ENCODE measurements at regions of chr1 and their contacts with region 1.

Region 1: DNA sequence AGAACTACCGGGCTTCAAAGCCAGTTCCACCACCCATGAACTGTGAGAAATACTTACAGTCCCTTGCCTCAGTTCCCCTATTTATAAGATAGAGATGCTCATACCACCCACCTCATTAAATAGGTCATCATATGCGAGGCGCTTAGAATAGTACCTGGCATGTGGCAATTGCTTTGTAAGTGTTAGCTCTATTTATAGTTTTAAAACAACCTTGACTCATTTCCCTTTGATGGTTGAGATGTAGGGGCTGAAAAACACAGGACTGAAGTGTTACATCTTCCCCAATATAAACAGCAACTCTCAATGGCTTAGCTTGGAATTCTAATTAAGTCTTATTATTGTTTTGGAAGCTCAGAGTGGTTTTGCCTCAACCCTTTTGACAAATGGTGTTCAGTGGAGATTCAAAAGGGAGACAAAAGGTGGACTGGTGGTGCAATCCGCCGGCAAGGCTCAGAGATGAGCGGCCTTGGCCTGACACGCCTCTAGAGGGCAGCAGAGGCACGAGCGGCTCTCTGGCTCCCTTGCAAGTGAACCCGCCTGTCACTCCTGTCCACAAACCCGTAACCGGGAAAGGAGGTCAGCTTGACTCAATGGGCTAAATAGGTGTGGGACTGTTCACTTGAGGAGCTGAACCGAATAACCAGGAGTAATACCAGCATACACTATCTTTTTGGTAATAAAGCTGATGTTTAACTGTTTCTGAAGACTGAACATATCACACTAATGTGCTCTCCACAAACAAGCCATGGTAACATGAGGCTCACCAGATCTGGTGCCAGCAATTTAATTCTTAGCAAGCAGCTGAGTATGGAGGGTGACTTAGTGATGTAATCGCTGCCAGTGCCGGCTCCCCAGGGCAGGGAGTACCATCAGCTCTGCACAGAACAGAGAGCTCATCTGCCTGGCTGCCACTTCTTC is 19.5 kb upstream of the SMYD2 start:
- DNase-seq: peak; percentile 65 to 83 (median 71)
- H3K4me3 ChIP-seq: no peak overlapping the region
- H3K4me3 Mint-ChIP-seq: no peak overlapping the region
- H3K27ac ChIP-seq: no peak overlapping the region
- H3K27ac Mint-ChIP-seq: no peak overlapping the region
- H3K4me1 ChIP-seq: no peaks in the 10 kb centered on the region
- H3K4me1 Mint-ChIP-seq: peaks cover 0 to 6% (median 6%) of the 10 kb centered on the region in 3 donors
- H3K27me3 ChIP-seq: peaks cover 18% of the 10 kb centered on the region
- H3K27me3 Mint-ChIP-seq: peaks cover 37 to 80% of the 10 kb centered on the region in 2 donors

Region 2: GRCh38 chr1:213982672-213983492 is 278.6 kb before region 1 on chr1:
- CTCF ChIA-PET with region 1: no interaction called
- POLR2A ChIA-PET with region 1: no interaction called
- DNase-seq: no peak
- H3K4me3 ChIP-seq: no peak overlapping the region
- H3K4me3 Mint-ChIP-seq: no peak overlapping the region
- H3K27ac ChIP-seq: no peak overlapping the region
- H3K27ac Mint-ChIP-seq: no peak overlapping the region
- H3K4me1 ChIP-seq: peaks cover 5% of the 10 kb centered on the region
- H3K4me1 Mint-ChIP-seq: peaks cover 9 to 26% (median 23%) of the 10 kb centered on the region in 3 donors
- H3K27me3 ChIP-seq: peaks cover 56% of the 10 kb centered on the region
- H3K27me3 Mint-ChIP-seq: peaks cover 68 to 81% of the 10 kb centered on the region in 2 donors

Region 3: DNA sequence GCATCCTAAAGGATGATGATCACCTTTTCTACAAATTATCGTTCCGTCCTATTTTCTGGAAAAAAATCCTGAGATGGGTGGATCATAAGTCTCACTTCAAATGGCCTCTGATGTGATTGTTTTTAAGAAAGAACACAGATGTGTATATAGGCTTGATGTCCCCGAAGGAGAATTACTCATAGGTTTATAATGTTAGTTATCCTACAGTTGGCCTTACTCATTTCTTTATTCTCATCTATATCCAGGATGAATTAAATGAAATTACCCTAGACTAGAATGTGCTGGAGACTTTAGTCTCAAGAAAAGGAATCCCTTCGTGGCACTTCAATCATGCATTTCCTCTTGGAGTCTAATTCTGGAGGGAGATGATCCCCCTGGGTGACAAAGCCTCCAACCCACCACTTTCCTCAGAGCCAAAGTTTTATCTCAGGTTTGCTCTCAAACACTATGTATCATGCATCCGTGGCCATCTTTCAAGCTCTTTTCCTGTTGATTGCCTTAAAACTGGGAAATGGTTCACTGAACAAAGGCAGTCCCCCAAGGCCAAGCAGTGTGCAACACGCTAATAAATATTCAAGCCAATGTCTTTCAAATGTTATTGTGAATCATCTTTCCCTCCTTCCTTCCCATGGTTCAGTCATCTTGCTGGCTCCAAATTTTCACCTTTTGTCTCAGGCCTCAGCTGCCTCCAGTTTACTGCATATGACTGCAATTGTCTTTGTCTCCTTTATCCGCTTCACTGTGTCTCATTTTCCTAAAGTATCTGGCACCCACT is 13.0 kb before region 1 on chr1:
- CTCF ChIA-PET with region 1: interaction called, 16 read pairs
- POLR2A ChIA-PET with region 1: no interaction called
- DNase-seq: no peak
- H3K4me3 ChIP-seq: no peak overlapping the region
- H3K4me3 Mint-ChIP-seq: no peak overlapping the region
- H3K27ac ChIP-seq: no peak overlapping the region
- H3K27ac Mint-ChIP-seq: peak overlapping the region in 2 of 8 donors; percentile 7
- H3K4me1 ChIP-seq: no peaks in the 10 kb centered on the region
- H3K4me1 Mint-ChIP-seq: no peaks in the 10 kb centered on the region
- H3K27me3 ChIP-seq: no peaks in the 10 kb centered on the region
- H3K27me3 Mint-ChIP-seq: peaks cover 10 to 51% of the 10 kb centered on the region in 2 donors

Region 4: GRCh38 chr1:214281021-214281719 is 19.7 kb after region 1 on chr1 and contains the start of gene SMYD2:
- CTCF ChIA-PET with region 1: interaction called, 18 read pairs
- POLR2A ChIA-PET with region 1: no interaction called
- DNase-seq: peak; percentile 58 to 79 (median 75)
- H3K4me3 ChIP-seq: peak within 1 kb of the TSS; percentile 91
- H3K4me3 Mint-ChIP-seq: peak within 1 kb of the TSS; percentile 83 to 92 (median 88)
- H3K27ac ChIP-seq: peak within 1 kb of the TSS; percentile 80
- H3K27ac Mint-ChIP-seq: peak within 1 kb of the TSS; percentile 73 to 96 (median 92)
- H3K4me1 ChIP-seq: peaks cover 22% of the 10 kb centered on the region
- H3K4me1 Mint-ChIP-seq: peaks cover 47 to 67% (median 61%) of the 10 kb centered on the region in 3 donors
- H3K27me3 ChIP-seq: no peaks in the 10 kb centered on the region
- H3K27me3 Mint-ChIP-seq: peaks cover 0 to 1% of the 10 kb centered on the region in 2 donors
- total RNA-seq, gene SMYD2: 23.2 to 25.9 TPM

Region 5: GRCh38 chr1:214303141-214303930 is 41.9 kb after region 1 on chr1:
- CTCF ChIA-PET with region 1: interaction called, 10 read pairs
- POLR2A ChIA-PET with region 1: no interaction called
- DNase-seq: no peak
- H3K4me3 ChIP-seq: no peak overlapping the region
- H3K4me3 Mint-ChIP-seq: peak overlapping the region in 1 of 7 donors; percentile 59
- H3K27ac ChIP-seq: no peak overlapping the region
- H3K27ac Mint-ChIP-seq: no peak overlapping the region
- H3K4me1 ChIP-seq: no peaks in the 10 kb centered on the region
- H3K4me1 Mint-ChIP-seq: peaks cover 12 to 37% (median 36%) of the 10 kb centered on the region in 3 donors
- H3K27me3 ChIP-seq: no peaks in the 10 kb centered on the region
- H3K27me3 Mint-ChIP-seq: no peaks in the 10 kb centered on the region

Region 6: DNA sequence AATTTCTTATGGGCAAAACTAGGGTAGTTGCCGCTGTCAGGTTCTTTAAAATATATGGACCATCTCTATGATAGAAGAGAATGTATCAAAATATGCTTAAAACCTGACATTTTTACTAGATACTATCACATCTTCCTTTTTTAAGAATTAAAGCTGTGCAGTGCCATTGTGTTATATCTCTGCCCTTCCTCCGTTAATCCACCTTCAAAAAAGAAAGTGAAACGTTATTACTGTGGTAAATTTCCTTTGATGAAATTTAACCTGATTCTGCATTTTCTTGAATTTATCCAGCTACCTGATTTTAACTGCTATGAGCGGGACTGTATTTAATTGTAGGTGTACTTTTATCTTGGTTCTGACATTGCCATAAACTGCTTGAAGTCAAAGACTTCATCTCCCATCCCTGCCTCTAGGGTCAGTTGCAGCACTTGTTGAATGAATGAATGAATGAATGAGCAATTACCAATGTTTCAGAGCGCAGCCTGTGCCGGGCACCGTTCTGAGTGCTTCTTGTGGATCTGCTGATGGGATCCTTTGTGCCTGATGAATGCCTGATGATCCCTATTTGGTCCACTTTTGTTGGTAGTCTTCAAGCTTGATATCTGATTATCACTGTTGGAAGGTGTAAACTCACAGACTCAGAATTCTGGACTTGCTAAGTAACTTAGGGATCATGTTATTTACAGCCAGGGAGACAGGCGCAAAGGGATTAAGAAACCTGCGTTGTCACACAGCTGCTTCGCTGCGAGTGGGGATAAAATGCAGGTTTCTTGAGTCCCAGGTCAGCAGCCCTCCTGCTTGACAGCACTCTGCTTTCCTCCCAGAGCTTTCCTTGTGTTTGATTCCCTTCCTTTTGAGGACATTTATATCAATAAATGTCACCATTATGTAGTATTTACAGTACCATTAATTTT is 49.6 kb after region 1 on chr1:
- CTCF ChIA-PET with region 1: interaction called, 38 read pairs
- POLR2A ChIA-PET with region 1: no interaction called
- DNase-seq: no peak
- H3K4me3 ChIP-seq: peak overlapping the region; percentile 29
- H3K4me3 Mint-ChIP-seq: peak overlapping the region; percentile 54 to 81 (median 73)
- H3K27ac ChIP-seq: no peak overlapping the region
- H3K27ac Mint-ChIP-seq: peak overlapping the region in 7 of 8 donors; percentile 6 to 82 (median 39)
- H3K4me1 ChIP-seq: peaks cover 15% of the 10 kb centered on the region
- H3K4me1 Mint-ChIP-seq: peaks cover 33 to 43% (median 36%) of the 10 kb centered on the region in 3 donors
- H3K27me3 ChIP-seq: no peaks in the 10 kb centered on the region
- H3K27me3 Mint-ChIP-seq: no peaks in the 10 kb centered on the region

Region 7: GRCh38 chr1:214316593-214316992 is 55.1 kb after region 1 on chr1:
- CTCF ChIA-PET with region 1: interaction called, 38 read pairs
- POLR2A ChIA-PET with region 1: no interaction called
- DNase-seq: no peak
- H3K4me3 ChIP-seq: no peak overlapping the region
- H3K4me3 Mint-ChIP-seq: no peak overlapping the region
- H3K27ac ChIP-seq: no peak overlapping the region
- H3K27ac Mint-ChIP-seq: peak overlapping the region in 3 of 8 donors; percentile 12 to 52 (median 35)
- H3K4me1 ChIP-seq: no peaks in the 10 kb centered on the region
- H3K4me1 Mint-ChIP-seq: peaks cover 4 to 5% (median 5%) of the 10 kb centered on the region in 3 donors
- H3K27me3 ChIP-seq: no peaks in the 10 kb centered on the region
- H3K27me3 Mint-ChIP-seq: no peaks in the 10 kb centered on the region

Region 8: GRCh38 chr1:214337511-214337910 is 76.0 kb after region 1 on chr1:
- CTCF ChIA-PET with region 1: interaction called, 356 read pairs
- POLR2A ChIA-PET with region 1: no interaction called
- DNase-seq: no peak
- H3K4me3 ChIP-seq: no peak overlapping the region
- H3K4me3 Mint-ChIP-seq: no peak overlapping the region
- H3K27ac ChIP-seq: no peak overlapping the region
- H3K27ac Mint-ChIP-seq: no peak overlapping the region
- H3K4me1 ChIP-seq: no peaks in the 10 kb centered on the region
- H3K4me1 Mint-ChIP-seq: no peaks in the 10 kb centered on the region
- H3K27me3 ChIP-seq: no peaks in the 10 kb centered on the region
- H3K27me3 Mint-ChIP-seq: no peaks in the 10 kb centered on the region

Region 9: GRCh38 chr1:214377886-214378285 is 116.4 kb after region 1 on chr1:
- CTCF ChIA-PET with region 1: no interaction called
- POLR2A ChIA-PET with region 1: no interaction called
- DNase-seq: no peak
- H3K4me3 ChIP-seq: no peak overlapping the region
- H3K4me3 Mint-ChIP-seq: no peak overlapping the region
- H3K27ac ChIP-seq: no peak overlapping the region
- H3K27ac Mint-ChIP-seq: no peak overlapping the region
- H3K4me1 ChIP-seq: no peaks in the 10 kb centered on the region
- H3K4me1 Mint-ChIP-seq: no peaks in the 10 kb centered on the region
- H3K27me3 ChIP-seq: no peaks in the 10 kb centered on the region
- H3K27me3 Mint-ChIP-seq: peaks cover 0 to 2% of the 10 kb centered on the region in 2 donors

Measured in CD8-positive, alpha-beta memory T cell (primary cell).